Activated T-helper 2 cell treated with anti-CD3 and anti-CD28 coated beads, Interferon-gamma antibody, Interleukin-2, Interleukin-4, amounts not matched to agents 10 μg/mL and 5 μg/mL and 100 μg/mL, durations not matched to agents 14 hours and 24 hours and 36 hours (primary cell): ENCODE measurements at regions of chr15 and their contacts with region 1.

Region 1: DNA sequence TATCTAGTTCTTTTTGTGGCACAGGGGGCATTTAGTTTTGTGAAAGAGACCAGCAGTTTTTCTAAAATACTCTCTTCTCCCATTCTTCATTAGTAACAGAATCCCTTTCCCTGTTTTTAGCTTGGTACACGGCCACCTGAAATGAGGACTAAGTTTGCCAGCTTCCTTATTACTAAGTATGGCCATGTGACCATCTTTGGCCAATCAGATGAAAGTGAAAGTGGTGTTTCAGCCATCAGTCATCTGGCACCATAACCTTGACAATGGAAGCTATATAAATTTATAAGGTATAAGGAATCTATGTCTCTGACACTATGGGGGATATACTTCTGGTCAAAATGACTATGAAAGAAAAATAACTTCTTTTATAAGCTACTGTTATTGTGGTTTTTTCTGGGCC is 570.4 kb downstream of the AGBL1 start:
- DNase-seq: no peak
- H3K4me3 Mint-ChIP-seq: peak overlapping the region; percentile 24
- H3K27ac Mint-ChIP-seq: peak overlapping the region; percentile 83
- H3K4me1 Mint-ChIP-seq: peaks cover 61% of the 10 kb centered on the region
- H3K27me3 Mint-ChIP-seq: no peaks in the 10 kb centered on the region

Region 2: GRCh38 chr15:85707519-85708338 is 942.4 kb before region 1 on chr15:
- intact Hi-C with region 1: loop called (anchors 5 kb)
- DNase-seq: no peak
- H3K4me3 Mint-ChIP-seq: peak overlapping the region; percentile 80
- H3K27ac Mint-ChIP-seq: peak overlapping the region; percentile 98
- H3K4me1 Mint-ChIP-seq: peaks cover 74% of the 10 kb centered on the region
- H3K27me3 Mint-ChIP-seq: no peaks in the 10 kb centered on the region

Region 3: DNA sequence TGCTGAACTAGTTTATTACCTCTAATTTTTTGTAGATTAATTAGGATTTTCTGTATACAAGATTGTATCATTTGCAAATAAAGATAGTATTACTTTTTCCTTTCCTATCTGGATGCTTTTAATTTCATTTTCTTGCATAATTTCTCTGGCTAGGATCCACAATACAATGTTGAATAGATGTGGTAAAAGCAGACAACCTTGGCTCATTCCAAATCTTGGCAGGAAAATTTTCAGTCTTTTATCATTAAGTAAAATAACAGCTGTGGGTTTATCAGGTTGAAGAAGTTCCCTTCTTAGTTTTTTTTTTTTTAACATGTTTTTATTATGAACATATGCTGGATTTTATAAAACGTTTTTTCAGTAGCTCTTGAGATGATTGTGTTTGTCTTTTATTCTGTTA is 147.8 kb before region 1 on chr15:
- intact Hi-C with region 1: no loop called
- DNase-seq: no peak
- H3K4me3 Mint-ChIP-seq: no peak overlapping the region
- H3K27ac Mint-ChIP-seq: no peak overlapping the region
- H3K4me1 Mint-ChIP-seq: no peaks in the 10 kb centered on the region
- H3K27me3 Mint-ChIP-seq: peaks cover 2% of the 10 kb centered on the region

Region 4: DNA sequence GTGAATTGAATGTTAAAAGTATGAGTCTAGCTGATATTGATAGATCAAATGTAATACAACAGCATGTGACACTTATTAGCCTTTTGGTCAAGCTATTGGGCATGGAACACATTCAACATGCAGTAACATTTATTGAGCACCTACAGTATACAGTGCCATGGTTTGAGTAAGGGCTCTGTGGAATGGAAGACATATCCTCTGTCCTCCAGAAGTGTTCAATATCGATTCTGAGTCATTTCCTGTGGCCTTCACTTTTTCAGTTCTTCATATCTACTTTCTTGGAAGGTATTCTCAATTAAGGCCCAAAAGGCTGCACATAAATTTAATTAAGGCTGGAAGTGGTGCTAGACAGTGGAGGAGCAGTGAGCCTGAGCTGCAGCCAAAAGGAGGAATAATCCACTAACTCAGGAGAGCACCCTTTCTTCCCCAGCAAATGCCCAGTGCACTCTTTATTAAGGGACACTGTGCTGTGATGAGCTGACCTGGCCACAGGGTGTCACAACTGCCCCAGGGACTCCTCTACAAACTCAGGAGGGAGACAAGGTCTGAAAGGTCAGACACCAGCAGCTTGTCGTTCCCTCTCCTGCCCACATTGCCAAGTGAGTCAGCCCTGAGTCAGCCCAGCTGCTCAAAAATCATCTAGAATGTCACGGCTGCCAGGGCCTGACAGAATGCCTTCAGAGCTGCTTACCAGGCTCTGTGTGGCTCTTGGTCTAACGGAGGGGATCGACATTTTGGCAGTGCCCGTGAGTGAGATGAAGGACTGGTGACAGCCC is 25.6 kb before region 1 on chr15:
- intact Hi-C with region 1: loop called (anchors 1 kb)
- DNase-seq: peak; percentile 65
- H3K4me3 Mint-ChIP-seq: peak overlapping the region; percentile 33
- H3K27ac Mint-ChIP-seq: peak overlapping the region; percentile 80
- H3K4me1 Mint-ChIP-seq: peaks cover 58% of the 10 kb centered on the region
- H3K27me3 Mint-ChIP-seq: no peaks in the 10 kb centered on the region

Region 5: GRCh38 chr15:86706813-86707212 is 56.7 kb after region 1 on chr15:
- intact Hi-C with region 1: loop called (anchors 1 kb)
- DNase-seq: no peak
- H3K4me3 Mint-ChIP-seq: no peak overlapping the region
- H3K27ac Mint-ChIP-seq: no peak overlapping the region
- H3K4me1 Mint-ChIP-seq: peaks cover 19% of the 10 kb centered on the region
- H3K27me3 Mint-ChIP-seq: no peaks in the 10 kb centered on the region

Region 6: GRCh38 chr15:87597346-87598052 is 947.4 kb after region 1 on chr15:
- intact Hi-C with region 1: loop called (anchors 2 kb)
- DNase-seq: peak; percentile 48
- H3K4me3 Mint-ChIP-seq: no peak overlapping the region
- H3K27ac Mint-ChIP-seq: peak overlapping the region; percentile 65
- H3K4me1 Mint-ChIP-seq: peaks cover 31% of the 10 kb centered on the region
- H3K27me3 Mint-ChIP-seq: peaks cover 7% of the 10 kb centered on the region